Activated T-helper 2 cell treated with anti-CD3 and anti-CD28 coated beads, Interferon-gamma antibody, Interleukin-2, Interleukin-4, amounts not matched to agents 10 μg/mL and 5 μg/mL and 100 μg/mL, durations not matched to agents 14 hours and 24 hours and 36 hours (primary cell): ENCODE measurements at regions of chr16 and their contacts with region 1.

Region 1: DNA sequence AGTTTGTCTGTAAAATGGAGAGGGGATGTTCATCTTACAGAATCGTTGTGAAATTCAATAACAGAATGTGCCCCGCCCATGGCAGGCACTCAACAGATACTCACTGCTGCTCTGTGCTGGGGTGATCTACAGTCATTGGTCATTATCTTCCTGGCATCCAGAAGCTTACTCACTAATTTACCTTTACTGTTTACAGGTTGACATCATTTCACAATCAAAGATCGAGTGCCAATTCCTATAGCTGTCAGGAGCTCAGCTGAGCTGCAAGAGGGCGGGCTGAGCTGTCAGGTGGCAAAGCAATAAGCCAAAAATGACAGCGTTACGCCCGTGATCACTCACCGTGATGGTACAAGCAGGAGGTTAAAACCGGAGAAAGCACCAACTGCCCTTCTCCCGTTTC is 51.2 kb downstream of the LITAF start:
- DNase-seq: no peak
- H3K4me3 Mint-ChIP-seq: no peak overlapping the region
- H3K27ac Mint-ChIP-seq: no peak overlapping the region
- H3K4me1 Mint-ChIP-seq: peaks cover 2% of the 10 kb centered on the region
- H3K27me3 Mint-ChIP-seq: no peaks in the 10 kb centered on the region

Region 2: GRCh38 chr16:11407047-11407982 is 128.2 kb before region 1 on chr16:
- intact Hi-C with region 1: loop called (anchors 5 kb)
- DNase-seq: peak; percentile 52
- H3K4me3 Mint-ChIP-seq: no peak overlapping the region
- H3K27ac Mint-ChIP-seq: no peak overlapping the region
- H3K4me1 Mint-ChIP-seq: peaks cover 3% of the 10 kb centered on the region
- H3K27me3 Mint-ChIP-seq: peaks cover 3% of the 10 kb centered on the region

Region 3: DNA sequence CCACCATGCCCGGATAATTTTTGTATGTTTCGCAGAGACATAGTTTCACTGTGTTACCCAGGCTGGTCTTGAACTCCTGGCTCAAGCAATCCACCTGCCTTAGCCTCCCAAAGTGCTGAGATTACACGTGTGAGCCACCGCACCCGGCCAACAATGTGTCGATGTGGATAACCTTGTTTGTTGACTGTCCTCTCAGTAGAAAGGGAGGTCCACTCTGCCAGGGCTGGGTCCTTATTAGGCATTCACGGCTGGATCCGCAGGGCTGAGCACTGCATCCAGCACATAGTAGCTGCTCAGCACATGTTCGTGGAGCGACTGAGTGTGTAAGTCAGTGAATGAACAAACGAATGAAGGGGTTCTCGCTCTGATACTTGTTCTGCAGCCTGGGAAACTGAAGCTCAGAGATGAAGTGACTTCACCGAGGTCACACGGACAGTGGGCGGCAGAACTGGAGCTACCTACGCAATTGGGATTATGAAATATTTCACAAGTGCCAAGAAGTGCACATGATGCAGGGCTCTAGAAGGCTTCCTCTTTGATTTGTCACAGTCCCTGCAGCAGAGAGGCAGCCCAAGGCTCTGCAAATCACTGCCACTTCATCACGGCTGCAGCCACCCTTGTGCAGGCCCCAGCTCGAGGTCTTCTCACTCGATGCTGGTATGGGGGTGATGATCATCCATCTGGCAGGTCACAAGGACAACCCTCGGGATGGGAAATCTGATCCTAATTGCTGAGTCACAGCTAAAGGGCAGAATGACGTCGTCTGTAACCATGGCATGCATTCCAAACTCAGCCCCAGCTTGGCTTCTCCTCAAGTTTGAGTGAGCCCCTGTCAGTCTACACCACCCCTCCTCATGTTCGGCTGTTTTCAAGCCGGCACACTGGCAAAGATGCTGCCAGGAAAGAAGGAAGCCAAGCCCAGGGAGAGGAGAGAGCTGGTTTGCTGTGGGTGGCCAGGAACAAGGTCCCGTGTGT is 104.7 kb after region 1 on chr16:
- intact Hi-C with region 1: loop called (anchors 1 kb)
- DNase-seq: no peak
- H3K4me3 Mint-ChIP-seq: no peak overlapping the region
- H3K27ac Mint-ChIP-seq: no peak overlapping the region
- H3K4me1 Mint-ChIP-seq: peaks cover 10% of the 10 kb centered on the region
- H3K27me3 Mint-ChIP-seq: peaks cover 8% of the 10 kb centered on the region

Region 4: DNA sequence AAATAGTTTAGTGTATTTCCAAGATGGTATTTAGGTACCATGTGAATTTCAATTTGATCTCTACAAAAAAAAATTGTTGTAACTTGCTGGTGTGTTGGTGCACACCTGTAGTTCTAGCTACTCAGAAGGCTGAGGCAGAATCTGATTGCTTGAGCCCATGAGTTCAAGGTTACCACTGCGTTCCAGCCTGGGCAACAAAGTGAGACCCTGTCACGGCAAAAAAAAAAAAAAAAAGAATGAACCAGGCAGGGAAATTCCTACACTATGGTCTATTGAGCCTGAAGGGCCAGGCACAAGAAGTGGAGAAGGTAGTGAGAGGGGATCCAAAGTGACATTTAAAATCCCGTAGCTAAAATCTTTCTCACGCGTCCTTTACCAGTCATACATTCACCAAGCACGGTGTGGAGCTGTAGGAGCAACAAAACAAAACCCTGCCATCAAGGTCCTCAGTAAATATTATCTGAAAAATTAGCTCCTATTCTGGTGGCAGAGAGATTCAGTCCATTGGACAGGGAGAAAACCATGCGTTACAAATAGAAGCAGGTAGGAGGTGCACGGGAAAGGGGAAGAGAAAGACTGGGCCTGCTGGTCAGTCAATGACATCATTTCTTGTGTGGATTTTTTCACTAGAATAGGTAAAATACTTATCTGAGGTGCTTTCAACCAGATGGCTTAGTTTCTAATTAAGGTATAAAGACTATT is 179.9 kb after region 1 on chr16:
- intact Hi-C with region 1: loop called (anchors 2 kb)
- DNase-seq: no peak
- H3K4me3 Mint-ChIP-seq: no peak overlapping the region
- H3K27ac Mint-ChIP-seq: no peak overlapping the region
- H3K4me1 Mint-ChIP-seq: peaks cover 7% of the 10 kb centered on the region
- H3K27me3 Mint-ChIP-seq: no peaks in the 10 kb centered on the region